Dorsolateral prefrontal cortex (tissue), 120 donors: ENCODE measurements at regions of chr11 and their contacts with region 1.

Region 1: GRCh38 chr11:67507864-67508485 is at the start of gene CDK2AP2:
- DNase-seq: peak; percentile 97 to 100 (median 99)
- H3K4me3 ChIP-seq: peak within 1 kb of the TSS; percentile 60 to 99 (median 90)
- H3K27ac ChIP-seq: peak within 1 kb of the TSS; percentile 80 to 100 (median 99)
- H3K27me3 ChIP-seq: peaks cover 0 to 8% (median 0%) of the 10 kb centered on the region in 45 donors
- CTCF ChIP-seq: peak in 15 of 56 donors; percentile 2 to 50 (median 10)
- total RNA-seq, gene CDK2AP2: 16.6 to 82.7 (median 33.4) TPM

Region 2: GRCh38 chr11:67353317-67354074 is 154.5 kb before region 1 on chr11 and contains the start of gene POLD4:
- intact Hi-C with region 1: loop called (anchors 2 to 5 kb)
- DNase-seq: peak; percentile 98 to 99 (median 98)
- H3K4me3 ChIP-seq: peak within 1 kb of the TSS; percentile 69 to 98 (median 86)
- H3K27ac ChIP-seq: peak within 1 kb of the TSS; percentile 85 to 100 (median 97)
- H3K27me3 ChIP-seq: no peaks in the 10 kb centered on the region
- CTCF ChIP-seq: peak in 21 of 56 donors; percentile 3 to 46 (median 18)
- total RNA-seq, gene POLD4: 11.4 to 49.5 (median 26.7) TPM

Region 3: DNA sequence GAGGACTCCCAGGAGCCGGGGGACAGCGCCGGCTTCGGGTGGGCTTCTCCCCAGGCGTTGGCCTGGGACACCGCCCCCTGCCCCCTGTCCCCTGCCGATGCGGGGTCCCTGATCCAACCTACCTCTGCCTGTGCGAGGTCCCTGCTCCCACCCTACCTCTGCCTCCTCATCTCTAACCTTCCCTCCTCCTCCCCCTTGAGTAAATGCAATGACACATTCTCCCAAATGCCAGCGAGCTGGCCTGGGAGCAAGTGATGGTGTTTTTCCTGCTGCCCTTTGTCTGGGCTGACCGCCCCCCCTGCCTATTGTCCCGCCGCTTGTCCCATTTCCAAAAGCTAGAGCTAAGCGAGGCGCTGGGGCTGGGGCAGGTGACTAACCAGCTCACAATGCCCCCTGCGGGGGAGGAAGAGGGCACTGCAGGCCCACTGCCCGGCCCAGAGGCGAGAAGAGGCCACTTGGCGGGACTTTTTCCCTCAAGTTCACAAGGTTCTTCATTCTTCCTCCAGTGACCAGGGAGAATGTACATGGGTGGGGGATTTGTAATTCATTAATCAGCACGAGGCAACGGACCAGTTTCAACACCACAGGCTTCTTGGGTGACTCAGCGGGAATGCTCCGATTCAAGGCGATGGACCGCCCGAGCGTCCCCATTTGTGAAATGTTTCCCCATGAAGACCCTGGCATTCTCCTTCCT is 133.9 kb before region 1 on chr11:
- intact Hi-C with region 1: no loop called
- DNase-seq: peak in 1 of 10 donors; percentile 64
- H3K4me3 ChIP-seq: peak overlapping the region in 41 of 59 donors; percentile 5 to 78 (median 62)
- H3K27ac ChIP-seq: peak overlapping the region in 1 of 59 donors; percentile 45
- H3K27me3 ChIP-seq: peaks cover 0 to 14% (median 0%) of the 10 kb centered on the region in 45 donors
- CTCF ChIP-seq: peak in 36 of 56 donors; percentile 8 to 45 (median 25)

Region 4: GRCh38 chr11:67428052-67428914 is 79.7 kb before region 1 on chr11 and contains the start of gene RPS6KB2:
- intact Hi-C with region 1: loop called in 1 of 2 experiments (anchors 5 kb)
- DNase-seq: peak; percentile 97 to 100 (median 99)
- H3K4me3 ChIP-seq: peak within 1 kb of the TSS; percentile 55 to 99 (median 92)
- H3K27ac ChIP-seq: peak within 1 kb of the TSS; percentile 52 to 99 (median 95)
- H3K27me3 ChIP-seq: no peaks in the 10 kb centered on the region
- CTCF ChIP-seq: peak in 39 of 56 donors; percentile 9 to 63 (median 31)
- total RNA-seq, gene RPS6KB2: 13.4 to 47.4 (median 28.2) TPM

Region 5: DNA sequence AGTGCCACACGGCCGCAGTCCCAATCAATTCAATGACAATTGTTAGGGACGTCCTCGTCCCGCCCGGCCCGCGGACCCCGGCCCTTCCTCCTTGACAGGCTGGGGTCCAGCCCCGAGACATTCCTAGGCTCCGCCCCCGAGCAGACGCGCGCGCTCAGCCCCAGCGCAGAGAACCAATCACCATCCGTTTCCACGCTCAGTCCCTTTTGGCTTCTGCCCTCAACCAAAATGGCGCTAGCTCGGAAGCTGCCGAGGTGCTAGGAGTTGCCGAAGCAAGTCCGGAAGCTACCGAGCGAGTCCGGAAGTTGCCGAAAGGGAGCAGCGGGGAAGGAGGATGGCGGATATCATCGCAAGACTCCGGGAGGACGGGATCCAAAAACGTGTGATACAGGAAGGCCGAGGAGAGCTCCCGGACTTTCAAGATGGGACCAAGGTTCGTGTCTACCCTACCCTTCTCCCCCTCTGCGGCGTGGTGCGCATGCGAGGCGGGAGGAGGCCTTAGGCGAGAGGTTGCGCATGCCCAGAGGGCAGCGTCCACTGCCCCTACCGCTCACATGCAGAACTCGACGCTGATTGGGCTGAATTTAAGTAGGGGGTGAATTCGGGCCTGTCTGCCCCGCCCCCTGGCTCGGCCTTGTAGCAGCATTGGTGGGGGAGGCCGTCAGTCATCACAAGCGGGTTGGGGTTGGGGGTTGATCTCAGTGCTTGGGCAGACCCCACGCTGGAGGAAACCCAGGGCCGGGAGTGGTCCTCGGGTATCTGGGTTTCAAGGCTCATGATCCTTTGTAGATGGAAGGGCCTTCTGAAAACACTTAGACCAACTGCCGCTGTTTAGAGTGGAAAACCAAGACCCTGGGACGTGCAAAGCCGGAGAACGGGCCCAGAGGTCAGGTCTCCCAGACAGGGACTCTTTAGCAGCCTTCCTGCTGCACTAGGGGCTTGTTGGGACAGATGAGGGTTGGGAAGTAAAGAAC is 24.9 kb before region 1 on chr11 and contains the start of gene AIP:
- intact Hi-C with region 1: loop called in 1 of 2 experiments (anchors 1 kb)
- DNase-seq: peak; percentile 87 to 97 (median 96)
- H3K4me3 ChIP-seq: peak within 1 kb of the TSS; percentile 53 to 85 (median 69)
- H3K27ac ChIP-seq: peak within 1 kb of the TSS; percentile 86 to 99 (median 96)
- H3K27me3 ChIP-seq: no peaks in the 10 kb centered on the region
- CTCF ChIP-seq: peak in 36 of 56 donors; percentile 6 to 49 (median 28)
- total RNA-seq, gene AIP: 51.6 to 82.9 (median 65.8) TPM

Region 6: GRCh38 chr11:67606492-67607201 is 98.7 kb after region 1 on chr11 and contains the start of gene NDUFV1:
- intact Hi-C with region 1: loop called in 1 of 2 experiments (anchors 5 kb)
- DNase-seq: peak; percentile 92 to 99 (median 97)
- H3K4me3 ChIP-seq: peak within 1 kb of the TSS; percentile 71 to 100 (median 98)
- H3K27ac ChIP-seq: peak within 1 kb of the TSS in 58 of 59 donors; percentile 2 to 96 (median 83)
- H3K27me3 ChIP-seq: no peaks in the 10 kb centered on the region
- CTCF ChIP-seq: peak; percentile 21 to 96 (median 83)
- total RNA-seq, gene NDUFV1: 176 to 398 (median 251) TPM